Colonic mucosa (tissue), 4 donors: ENCODE measurements at regions of chr6 and their contacts with region 1.

Region 1: DNA sequence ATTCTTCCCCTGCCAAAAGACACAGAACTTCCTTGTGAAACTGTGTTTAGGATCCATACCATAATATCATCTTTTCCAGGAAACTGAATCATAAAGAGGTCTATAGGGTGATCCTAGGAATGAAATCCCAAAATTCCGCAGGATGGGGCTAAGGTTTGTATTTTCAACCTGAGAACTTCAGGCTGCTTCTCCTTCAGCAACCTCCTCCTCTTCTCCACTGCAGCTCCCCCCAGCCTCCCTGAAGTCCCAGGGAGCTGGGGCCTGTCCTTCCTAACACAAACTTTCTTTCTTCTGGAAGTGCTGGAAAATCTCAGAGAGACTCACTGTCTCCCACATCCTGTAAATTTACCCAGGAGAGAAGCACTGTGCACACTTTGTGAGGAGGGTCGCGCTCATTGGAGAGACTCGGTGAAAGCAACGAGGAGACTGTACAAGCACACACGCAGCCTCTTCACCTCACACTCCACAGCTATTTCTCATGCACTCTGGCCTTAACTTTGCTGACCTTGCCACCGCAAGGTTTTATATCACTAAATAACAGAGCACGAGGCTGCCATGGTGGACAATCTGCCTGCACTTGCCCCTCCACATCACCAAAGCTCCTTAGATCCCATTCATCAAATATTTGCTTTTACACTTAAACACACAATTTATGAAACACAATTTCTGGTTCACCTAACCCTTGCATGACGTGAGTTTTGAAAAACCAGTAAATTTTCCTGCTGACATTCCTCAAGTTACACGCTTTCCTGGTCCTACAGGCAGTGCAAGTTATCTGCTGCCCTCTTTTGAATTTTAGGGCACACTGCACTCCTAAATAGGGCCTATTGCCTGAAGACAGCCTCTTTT is 14.3 kb downstream of the ID4 start:
- DNase-seq: peak; percentile 31
- H3K4me3 ChIP-seq: no peak overlapping the region
- H3K27ac ChIP-seq: no peak overlapping the region
- H3K4me1 ChIP-seq: no peaks in the 10 kb centered on the region
- H3K27me3 ChIP-seq: no peaks in the 10 kb centered on the region
- CTCF ChIP-seq: peak; percentile 75

Region 2: GRCh38 chr6:18595774-18596530 is 1255.5 kb before region 1 on chr6:
- intact Hi-C with region 1: loop called (anchors 10 kb)
- DNase-seq: peak; percentile 73
- H3K4me3 ChIP-seq: no peak overlapping the region
- H3K27ac ChIP-seq: no peak overlapping the region
- H3K4me1 ChIP-seq: no peaks in the 10 kb centered on the region
- H3K27me3 ChIP-seq: no peaks in the 10 kb centered on the region
- CTCF ChIP-seq: peak; percentile 88

Region 3: GRCh38 chr6:18742406-18742805 is 1109.1 kb before region 1 on chr6:
- intact Hi-C with region 1: loop called (anchors 10 kb)
- DNase-seq: no peak
- H3K4me3 ChIP-seq: no peak overlapping the region
- H3K27ac ChIP-seq: no peak overlapping the region
- H3K4me1 ChIP-seq: no peaks in the 10 kb centered on the region
- H3K27me3 ChIP-seq: no peaks in the 10 kb centered on the region
- CTCF ChIP-seq: no peak

Region 4: GRCh38 chr6:20109526-20109925 is 258.1 kb after region 1 on chr6:
- intact Hi-C with region 1: no loop called
- DNase-seq: no peak
- H3K4me3 ChIP-seq: no peak overlapping the region
- H3K27ac ChIP-seq: no peak overlapping the region
- H3K4me1 ChIP-seq: no peaks in the 10 kb centered on the region
- H3K27me3 ChIP-seq: no peaks in the 10 kb centered on the region
- CTCF ChIP-seq: no peak